GM12878 (cell line): ENCODE measurements at regions of chr16 and their contacts with region 1.

Region 1: GRCh38 chr16:81204798-81205680 is 33.5 kb upstream of the BCO1 start:
- DNase-seq: peak; percentile 11
- ATAC-seq: peak; percentile 75
- H3K4me3 ChIP-seq: no peak overlapping the region
- H3K27ac ChIP-seq: no peak overlapping the region
- H3K4me1 ChIP-seq: no peaks in the 10 kb centered on the region
- H3K27me3 ChIP-seq: peaks cover 0 to 1% of the 10 kb centered on the region in 2 experiments; a peak in 1 of 4 replicates
- CTCF ChIP-seq: peak; percentile 67 to 86 (median 73)
- EP300 ChIP-seq: no peak
- POLR2A ChIP-seq: no peak
- RAD21 ChIP-seq: peak; percentile 54

Region 2: GRCh38 chr16:81189100-81189664 is 15.9 kb before region 1 on chr16:
- CTCF ChIA-PET with region 1: interaction called, 11 read pairs
- POLR2A ChIA-PET with region 1: no interaction called
- RAD21 ChIA-PET with region 1: no interaction called
- SMC1A ChIA-PET with region 1: interaction called, 4 read pairs
- in situ Hi-C with region 1: no loop called
- intact Hi-C with region 1: no loop called
- DNase-seq: no peak
- ATAC-seq: no peak
- H3K4me3 ChIP-seq: no peak overlapping the region
- H3K27ac ChIP-seq: no peak overlapping the region
- H3K4me1 ChIP-seq: no peaks in the 10 kb centered on the region
- H3K27me3 ChIP-seq: no peaks in the 10 kb centered on the region; a peak in 1 of 4 replicates
- CTCF ChIP-seq: no peak
- EP300 ChIP-seq: no peak
- POLR2A ChIP-seq: no peak
- RAD21 ChIP-seq: no peak

Region 3: DNA sequence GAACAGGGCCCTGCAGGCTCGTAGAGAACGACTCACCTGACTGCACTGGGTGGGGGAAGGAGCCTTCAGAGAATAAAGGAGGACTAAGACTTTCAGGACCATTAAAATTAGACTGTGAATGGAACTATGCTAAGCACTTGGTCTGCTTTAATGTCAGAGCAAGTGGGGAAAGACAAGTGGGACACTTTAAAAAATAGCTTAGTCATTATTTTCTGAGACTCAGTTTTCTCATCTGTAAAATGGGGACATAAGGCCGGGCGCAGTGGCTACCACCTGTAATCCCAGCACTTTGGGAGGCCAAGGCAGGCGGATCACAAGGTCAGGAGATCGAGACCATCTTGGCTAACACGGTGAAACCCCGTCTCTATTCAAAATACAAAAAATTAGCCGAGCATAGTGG is 14.1 kb after region 1 on chr16:
- CTCF ChIA-PET with region 1: interaction called, 17 read pairs
- POLR2A ChIA-PET with region 1: interaction called, 3 read pairs
- RAD21 ChIA-PET with region 1: no interaction called
- SMC1A ChIA-PET with region 1: interaction called, 3 read pairs
- in situ Hi-C with region 1: no loop called
- intact Hi-C with region 1: no loop called
- DNase-seq: no peak
- ATAC-seq: no peak
- H3K4me3 ChIP-seq: no peak overlapping the region
- H3K27ac ChIP-seq: no peak overlapping the region
- H3K4me1 ChIP-seq: no peaks in the 10 kb centered on the region
- H3K27me3 ChIP-seq: peaks cover 0 to 1% of the 10 kb centered on the region in 2 experiments; a peak in 1 of 4 replicates
- CTCF ChIP-seq: no peak
- EP300 ChIP-seq: no peak
- POLR2A ChIP-seq: no peak
- RAD21 ChIP-seq: no peak

Region 4: DNA sequence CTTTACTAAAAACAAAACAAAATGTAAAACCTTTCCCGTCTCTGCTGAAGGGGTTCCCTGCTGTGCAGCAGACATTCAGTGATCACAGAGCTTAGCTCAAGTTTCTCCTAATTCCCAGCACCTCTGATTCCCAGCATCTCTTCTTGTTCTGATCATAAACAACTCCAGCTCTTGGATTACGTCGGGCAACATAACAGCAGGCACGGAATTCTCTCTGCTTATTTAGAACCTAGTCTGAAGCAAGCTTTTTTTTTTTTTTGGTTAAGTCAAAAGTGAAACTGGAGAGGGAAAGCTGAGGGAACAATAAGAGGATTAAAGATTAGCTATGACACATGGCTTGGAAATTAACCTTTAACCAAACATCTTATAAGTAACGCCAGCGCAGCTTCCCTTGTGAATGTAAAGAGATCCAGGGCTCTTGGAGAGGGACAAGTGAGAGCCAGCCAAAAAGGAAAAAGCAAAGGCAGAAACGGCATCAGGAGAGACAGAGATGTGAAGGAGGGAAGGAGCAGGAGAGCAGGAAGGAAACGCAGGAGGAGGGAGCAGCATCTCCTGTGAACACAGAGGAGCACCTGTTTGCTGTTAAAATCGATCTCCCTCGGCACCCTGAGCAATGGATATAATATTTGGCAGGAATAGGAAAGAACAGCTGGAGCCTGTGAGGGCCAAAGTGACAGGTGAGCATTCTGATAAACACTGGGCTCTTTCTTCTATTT is 33.4 kb after region 1 on chr16 and contains the start of gene BCO1:
- CTCF ChIA-PET with region 1: interaction called, 4 read pairs
- POLR2A ChIA-PET with region 1: interaction called, 10 read pairs
- RAD21 ChIA-PET with region 1: no interaction called
- SMC1A ChIA-PET with region 1: no interaction called
- in situ Hi-C with region 1: no loop called
- intact Hi-C with region 1: no loop called
- DNase-seq: no peak
- ATAC-seq: no peak
- H3K4me3 ChIP-seq: 0 out of 2 replicates have a peak within 1 kb of the TSS, but pooled peaks have one; percentile 2
- H3K27ac ChIP-seq: no peak within 1 kb of the TSS
- H3K4me1 ChIP-seq: no peaks in the 10 kb centered on the region
- H3K27me3 ChIP-seq: no peaks in the 10 kb centered on the region
- CTCF ChIP-seq: no peak
- EP300 ChIP-seq: no peak
- POLR2A ChIP-seq: no peak
- RAD21 ChIP-seq: no peak
- polyA plus RNA-seq, gene BCO1: 0.09 to 0.21 TPM

Region 5: GRCh38 chr16:81723098-81723723 is 518.2 kb after region 1 on chr16:
- CTCF ChIA-PET with region 1: interaction called, 12 read pairs
- POLR2A ChIA-PET with region 1: no interaction called
- RAD21 ChIA-PET with region 1: no interaction called
- SMC1A ChIA-PET with region 1: interaction called, 3 read pairs
- in situ Hi-C with region 1: no loop called
- intact Hi-C with region 1: no loop called
- DNase-seq: peak; percentile 62
- ATAC-seq: peak; percentile 97
- H3K4me3 ChIP-seq: no peak overlapping the region
- H3K27ac ChIP-seq: no peak overlapping the region
- H3K4me1 ChIP-seq: peaks cover 7% of the 10 kb centered on the region
- H3K27me3 ChIP-seq: no peaks in the 10 kb centered on the region
- CTCF ChIP-seq: peak; percentile 60 to 78 (median 69); a peak in 5 of 6 replicates
- EP300 ChIP-seq: no peak
- POLR2A ChIP-seq: no peak
- RAD21 ChIP-seq: peak; percentile 92